Sciatic nerve (tissue), 2 donors: ENCODE measurements at regions of chr3 and their contacts with region 1.

Region 1: GRCh38 chr3:32334675-32335074 is 57.0 kb upstream of the CMTM7 start:
- DNase-seq: no peak
- ATAC-seq: no peak

Region 2: GRCh38 chr3:32366638-32367397 is 32.1 kb after region 1 on chr3:
- intact Hi-C with region 1: loop called (anchors 1 kb)
- DNase-seq: no peak
- ATAC-seq: no peak